B cell (primary cell): ENCODE measurements at regions of chr4 and their contacts with region 1.

Region 1: DNA sequence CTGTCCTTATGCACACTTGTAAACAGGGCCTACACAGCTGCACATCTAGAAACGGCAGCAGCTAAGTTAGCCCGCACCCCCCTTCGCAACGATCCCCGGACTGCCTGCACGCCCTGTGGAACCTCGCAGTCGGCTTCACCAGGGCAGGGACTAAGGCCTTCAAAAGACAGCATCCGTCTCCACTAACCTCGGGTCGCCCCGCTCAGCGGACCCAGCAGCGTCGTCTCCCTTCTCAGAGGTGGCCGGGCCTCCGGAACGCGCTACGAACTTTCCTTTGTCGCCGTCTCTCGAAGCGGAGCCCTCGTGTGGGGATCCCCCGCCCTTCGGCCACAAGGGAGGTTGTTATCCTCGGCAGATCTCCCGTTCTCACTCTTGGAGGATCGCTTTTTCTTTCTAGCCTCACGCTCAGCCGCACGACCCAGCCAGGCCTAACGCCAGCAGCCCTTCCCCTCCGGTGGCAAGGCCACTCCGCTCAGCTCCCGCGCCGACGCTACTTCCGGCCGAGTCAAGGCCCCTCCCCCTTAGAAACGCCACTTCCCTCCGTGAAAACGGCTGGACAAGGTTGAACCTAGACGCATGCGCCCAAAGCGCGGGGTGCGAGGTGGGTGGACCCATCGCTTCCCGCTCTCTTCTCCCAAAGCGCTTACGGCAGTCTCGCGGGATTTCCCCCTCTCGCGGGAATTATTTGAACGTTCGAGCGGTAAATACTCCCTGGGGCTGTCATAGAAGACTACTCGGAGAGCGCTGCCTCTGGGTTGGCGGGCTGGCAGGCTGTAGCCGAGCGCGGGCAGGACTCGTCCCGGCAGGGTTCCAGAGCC is at the starts of genes DCAF16 and NCAPG:
- DNase-seq: peak; percentile 100
- ATAC-seq: peak; percentile 94
- H3K4me3 ChIP-seq: peak within 1 kb of the TSS; percentile 81 to 91 (median 86)
- H3K4me3 Mint-ChIP-seq: peak within 1 kb of the TSS; percentile 97
- H3K27ac ChIP-seq: peak within 1 kb of the TSS; percentile 94 to 99
- H3K27ac Mint-ChIP-seq: peak within 1 kb of the TSS; percentile 100
- H3K4me1 ChIP-seq: peaks cover 32 to 37% of the 10 kb centered on the region in 2 donors
- H3K4me1 Mint-ChIP-seq: peaks cover 54% of the 10 kb centered on the region
- H3K27me3 ChIP-seq: no peaks in the 10 kb centered on the region
- H3K27me3 Mint-ChIP-seq: no peaks in the 10 kb centered on the region
- CTCF ChIP-seq: no peak
- total RNA-seq, gene DCAF16: 68.1 and 69.9 TPM in 2 replicates
- total RNA-seq, gene NCAPG: 0.44 and 0.84 TPM in 2 replicates

Region 2: DNA sequence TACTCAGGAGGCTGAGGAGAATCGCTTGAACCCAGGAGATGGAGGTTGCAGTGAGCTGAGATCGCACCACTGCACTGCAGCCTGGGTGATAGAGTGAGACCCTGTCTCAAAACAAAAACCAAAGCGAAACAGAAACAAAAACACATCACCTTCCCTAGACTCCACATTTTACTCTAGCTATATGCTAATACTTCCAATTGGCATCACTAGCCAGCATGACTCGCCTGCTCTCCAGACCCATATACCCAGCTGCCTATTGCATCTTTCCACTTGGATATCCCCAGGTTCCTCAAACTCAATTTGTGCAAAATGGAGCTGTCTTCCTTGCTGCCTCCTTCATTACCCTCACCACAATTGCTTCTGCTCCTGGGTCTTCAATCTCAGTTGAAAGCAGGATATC is 255.9 kb before region 1 on chr4:
- CTCF ChIA-PET with region 1: interaction called, 53 read pairs
- POLR2A ChIA-PET with region 1: no interaction called
- intact Hi-C with region 1: loop called (anchors 1 kb)
- DNase-seq: no peak
- ATAC-seq: no peak
- H3K4me3 ChIP-seq: no peak overlapping the region
- H3K4me3 Mint-ChIP-seq: no peak overlapping the region
- H3K27ac ChIP-seq: no peak overlapping the region
- H3K27ac Mint-ChIP-seq: no peak overlapping the region
- H3K4me1 ChIP-seq: no peaks in the 10 kb centered on the region
- H3K4me1 Mint-ChIP-seq: no peaks in the 10 kb centered on the region
- H3K27me3 ChIP-seq: peaks cover 0 to 3% (median 0%) of the 10 kb centered on the region in 4 experiments
- H3K27me3 Mint-ChIP-seq: peaks cover 32% of the 10 kb centered on the region
- CTCF ChIP-seq: no peak

Region 3: DNA sequence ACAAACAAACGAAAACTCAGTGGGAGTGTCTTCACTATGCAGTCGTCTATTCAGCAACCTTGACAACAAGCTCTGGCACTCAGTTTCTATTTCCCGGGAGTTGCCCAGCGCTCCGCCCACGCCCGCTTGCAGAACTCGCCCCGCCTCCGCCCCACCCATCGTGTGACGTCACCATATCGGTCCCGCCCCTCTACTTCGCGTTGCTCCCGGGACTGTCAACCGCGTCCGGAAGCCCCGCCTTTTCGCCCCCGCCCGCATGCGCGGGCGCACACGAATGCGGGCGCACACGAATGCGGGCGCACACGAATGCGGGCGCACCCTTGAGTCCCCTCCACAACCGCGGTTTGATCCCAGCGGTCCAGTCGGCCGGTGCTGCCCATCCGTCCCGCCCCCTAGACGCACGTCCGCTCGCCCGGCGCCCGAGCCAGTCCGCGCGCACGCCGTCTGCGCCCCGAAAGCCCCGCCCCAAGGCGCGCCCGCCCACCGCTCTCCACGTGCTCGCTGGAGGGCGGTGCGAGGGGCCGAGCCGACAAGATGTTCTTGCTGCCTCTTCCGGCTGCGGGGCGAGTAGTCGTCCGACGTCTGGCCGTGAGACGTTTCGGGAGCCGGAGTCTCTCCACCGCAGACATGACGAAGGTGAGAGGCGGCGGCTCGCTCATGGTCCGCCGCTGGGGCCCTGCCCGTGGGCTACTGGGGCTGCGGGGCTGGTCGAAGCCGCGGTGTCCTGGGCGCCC is 233.4 kb before region 1 on chr4 and contains the start of gene LAP3:
- CTCF ChIA-PET with region 1: interaction called, 3 read pairs
- POLR2A ChIA-PET with region 1: interaction called, 4 read pairs
- intact Hi-C with region 1: loop called (anchors 1 kb)
- DNase-seq: peak; percentile 99
- ATAC-seq: peak; percentile 89
- H3K4me3 ChIP-seq: peak within 1 kb of the TSS; percentile 71 to 95 (median 83)
- H3K4me3 Mint-ChIP-seq: peak within 1 kb of the TSS; percentile 92
- H3K27ac ChIP-seq: peak within 1 kb of the TSS; percentile 85 to 87
- H3K27ac Mint-ChIP-seq: peak within 1 kb of the TSS; percentile 96
- H3K4me1 ChIP-seq: peaks cover 13 to 25% of the 10 kb centered on the region in 2 donors
- H3K4me1 Mint-ChIP-seq: peaks cover 30% of the 10 kb centered on the region
- H3K27me3 ChIP-seq: no peaks in the 10 kb centered on the region
- H3K27me3 Mint-ChIP-seq: no peaks in the 10 kb centered on the region
- CTCF ChIP-seq: no peak
- total RNA-seq, gene LAP3: 30.1 and 33.5 TPM in 2 replicates

Region 4: DNA sequence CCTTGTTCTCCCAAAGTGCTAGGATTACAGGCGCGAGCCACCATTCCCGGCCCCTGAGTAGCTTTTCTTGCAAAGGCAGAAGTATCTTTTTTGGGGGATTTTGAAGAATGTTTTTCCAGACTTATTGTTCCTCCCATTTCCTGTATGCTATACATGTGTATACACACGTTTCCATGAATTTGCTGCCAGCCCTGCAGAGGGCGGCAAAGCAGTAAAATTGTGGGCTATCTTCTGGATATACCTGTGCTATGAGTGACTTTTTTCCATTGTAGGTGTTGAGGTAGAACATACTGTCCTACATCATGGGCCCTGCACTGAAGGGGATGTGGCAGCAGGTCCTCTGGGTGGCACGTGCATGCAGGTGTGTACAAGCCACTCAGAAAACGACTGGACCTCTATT is 213.0 kb before region 1 on chr4:
- CTCF ChIA-PET with region 1: no interaction called
- POLR2A ChIA-PET with region 1: no interaction called
- intact Hi-C with region 1: loop called (anchors 1 kb)
- DNase-seq: no peak
- ATAC-seq: no peak
- H3K4me3 ChIP-seq: no peak overlapping the region
- H3K4me3 Mint-ChIP-seq: no peak overlapping the region
- H3K27ac ChIP-seq: no peak overlapping the region
- H3K27ac Mint-ChIP-seq: no peak overlapping the region
- H3K4me1 ChIP-seq: peaks cover 16 to 28% of the 10 kb centered on the region in 2 donors
- H3K4me1 Mint-ChIP-seq: peaks cover 30% of the 10 kb centered on the region
- H3K27me3 ChIP-seq: no peaks in the 10 kb centered on the region
- H3K27me3 Mint-ChIP-seq: no peaks in the 10 kb centered on the region
- CTCF ChIP-seq: no peak

Region 5: DNA sequence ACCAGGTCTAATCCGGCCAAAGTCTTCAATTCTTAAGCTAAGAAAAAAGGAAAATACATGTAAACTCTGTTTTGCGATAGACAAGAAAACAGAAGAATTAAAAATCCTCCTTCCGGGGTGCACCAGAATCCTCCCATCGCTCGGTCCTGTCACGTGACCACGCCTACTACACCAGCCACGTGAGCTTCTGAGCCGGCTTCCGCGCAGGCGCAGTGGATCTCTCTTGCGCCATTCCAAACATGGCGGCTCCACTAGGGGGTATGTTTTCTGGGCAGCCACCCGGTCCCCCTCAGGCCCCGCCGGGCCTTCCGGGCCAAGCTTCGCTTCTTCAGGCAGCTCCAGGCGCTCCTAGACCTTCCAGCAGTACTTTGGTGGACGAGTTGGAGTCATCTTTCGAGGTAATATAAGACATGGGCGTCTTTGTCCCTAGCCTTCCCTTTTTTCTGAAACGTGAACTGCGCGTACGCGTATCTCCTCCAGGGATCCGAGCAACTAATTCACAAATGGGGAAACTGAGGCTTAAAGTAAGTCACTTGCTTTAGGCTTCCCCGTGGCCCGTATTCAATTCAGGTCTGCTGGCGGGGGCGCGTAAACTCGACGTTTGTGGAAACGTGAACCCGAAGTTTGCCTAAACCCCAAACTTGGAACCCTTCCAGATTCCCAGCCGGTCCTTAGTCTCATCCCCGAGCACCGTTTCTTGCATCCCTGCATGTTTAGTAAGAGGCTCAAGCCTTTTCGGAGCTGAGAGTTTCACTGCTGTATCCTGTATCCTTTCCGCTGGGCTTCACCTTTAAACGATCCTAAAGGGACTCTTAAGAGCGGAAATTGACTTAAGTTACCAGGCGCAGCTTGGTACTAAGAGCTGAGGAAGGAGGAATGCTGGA is 195.8 kb before region 1 on chr4 and contains the start of gene MED28:
- CTCF ChIA-PET with region 1: interaction called, 5 read pairs
- POLR2A ChIA-PET with region 1: interaction called, 3 read pairs
- intact Hi-C with region 1: loop called (anchors 1 kb)
- DNase-seq: peak; percentile 96
- ATAC-seq: peak; percentile 91
- H3K4me3 ChIP-seq: peak within 1 kb of the TSS; percentile 73 to 100 (median 97)
- H3K4me3 Mint-ChIP-seq: peak within 1 kb of the TSS; percentile 100
- H3K27ac ChIP-seq: peak within 1 kb of the TSS; percentile 79 to 94
- H3K27ac Mint-ChIP-seq: peak within 1 kb of the TSS; percentile 91
- H3K4me1 ChIP-seq: peaks cover 16 to 35% of the 10 kb centered on the region in 2 donors
- H3K4me1 Mint-ChIP-seq: peaks cover 44% of the 10 kb centered on the region
- H3K27me3 ChIP-seq: no peaks in the 10 kb centered on the region
- H3K27me3 Mint-ChIP-seq: no peaks in the 10 kb centered on the region
- CTCF ChIP-seq: no peak
- total RNA-seq, gene MED28: 81.5 and 83.8 TPM in 2 replicates

Region 6: DNA sequence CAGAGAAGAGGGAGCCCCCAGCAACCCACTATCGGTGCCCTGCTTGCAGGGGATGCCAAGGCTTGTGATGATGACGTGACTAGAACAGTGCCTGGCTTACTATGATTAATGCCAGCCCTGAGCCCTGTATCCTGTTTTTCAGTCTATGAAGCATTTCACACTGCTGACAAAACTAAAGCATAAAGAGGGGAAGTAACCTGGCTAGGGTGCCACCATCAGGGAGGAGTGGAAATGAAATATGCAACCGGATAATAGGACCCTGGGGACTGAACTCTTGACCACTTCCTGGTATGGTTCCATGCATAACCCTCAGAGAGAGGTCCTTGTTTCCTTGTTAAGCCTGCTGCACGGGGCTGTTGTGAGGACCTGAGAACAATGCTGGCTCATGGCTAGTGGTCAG is 145.7 kb before region 1 on chr4:
- CTCF ChIA-PET with region 1: no interaction called
- POLR2A ChIA-PET with region 1: no interaction called
- intact Hi-C with region 1: no loop called
- DNase-seq: peak; percentile 56
- ATAC-seq: peak; percentile 80
- H3K4me3 ChIP-seq: no peak overlapping the region
- H3K4me3 Mint-ChIP-seq: peak overlapping the region; percentile 49
- H3K27ac ChIP-seq: no peak overlapping the region
- H3K27ac Mint-ChIP-seq: peak overlapping the region; percentile 42
- H3K4me1 ChIP-seq: peaks cover 26 to 32% of the 10 kb centered on the region in 2 donors
- H3K4me1 Mint-ChIP-seq: peaks cover 43% of the 10 kb centered on the region
- H3K27me3 ChIP-seq: no peaks in the 10 kb centered on the region
- H3K27me3 Mint-ChIP-seq: peaks cover 10% of the 10 kb centered on the region
- CTCF ChIP-seq: no peak

Region 7: DNA sequence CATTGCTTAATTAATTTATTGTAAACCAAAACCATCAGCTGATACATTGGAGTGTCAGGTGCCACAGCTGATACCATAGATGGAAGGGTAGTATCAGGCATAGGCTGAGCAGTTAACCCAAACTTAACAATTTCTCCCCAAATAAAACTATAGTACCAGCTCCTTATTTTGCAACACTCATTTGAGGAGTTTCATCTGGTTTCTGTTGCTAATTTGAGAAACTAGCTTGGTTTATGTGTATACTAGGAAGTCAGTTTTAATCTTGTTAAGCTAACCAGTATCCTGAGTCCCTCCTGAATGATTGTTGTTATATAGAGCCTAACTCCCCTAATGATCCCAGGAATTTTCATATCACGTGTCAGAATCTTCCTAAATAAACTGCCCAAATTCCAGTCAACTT is 12.7 kb before region 1 on chr4:
- CTCF ChIA-PET with region 1: interaction called, 11 read pairs
- POLR2A ChIA-PET with region 1: no interaction called
- intact Hi-C with region 1: no loop called
- DNase-seq: no peak
- ATAC-seq: no peak
- H3K4me3 ChIP-seq: no peak overlapping the region
- H3K4me3 Mint-ChIP-seq: no peak overlapping the region
- H3K27ac ChIP-seq: no peak overlapping the region
- H3K27ac Mint-ChIP-seq: no peak overlapping the region
- H3K4me1 ChIP-seq: no peaks in the 10 kb centered on the region
- H3K4me1 Mint-ChIP-seq: peaks cover 2% of the 10 kb centered on the region
- H3K27me3 ChIP-seq: no peaks in the 10 kb centered on the region
- H3K27me3 Mint-ChIP-seq: no peaks in the 10 kb centered on the region
- CTCF ChIP-seq: no peak

Region 8: GRCh38 chr4:17915439-17915838 is 105.0 kb after region 1 on chr4:
- CTCF ChIA-PET with region 1: no interaction called
- POLR2A ChIA-PET with region 1: no interaction called
- intact Hi-C with region 1: no loop called
- DNase-seq: no peak
- ATAC-seq: no peak
- H3K4me3 ChIP-seq: no peak overlapping the region
- H3K4me3 Mint-ChIP-seq: no peak overlapping the region
- H3K27ac ChIP-seq: no peak overlapping the region
- H3K27ac Mint-ChIP-seq: no peak overlapping the region
- H3K4me1 ChIP-seq: no peaks in the 10 kb centered on the region
- H3K4me1 Mint-ChIP-seq: no peaks in the 10 kb centered on the region
- H3K27me3 ChIP-seq: no peaks in the 10 kb centered on the region
- H3K27me3 Mint-ChIP-seq: no peaks in the 10 kb centered on the region
- CTCF ChIP-seq: no peak

Region 9: DNA sequence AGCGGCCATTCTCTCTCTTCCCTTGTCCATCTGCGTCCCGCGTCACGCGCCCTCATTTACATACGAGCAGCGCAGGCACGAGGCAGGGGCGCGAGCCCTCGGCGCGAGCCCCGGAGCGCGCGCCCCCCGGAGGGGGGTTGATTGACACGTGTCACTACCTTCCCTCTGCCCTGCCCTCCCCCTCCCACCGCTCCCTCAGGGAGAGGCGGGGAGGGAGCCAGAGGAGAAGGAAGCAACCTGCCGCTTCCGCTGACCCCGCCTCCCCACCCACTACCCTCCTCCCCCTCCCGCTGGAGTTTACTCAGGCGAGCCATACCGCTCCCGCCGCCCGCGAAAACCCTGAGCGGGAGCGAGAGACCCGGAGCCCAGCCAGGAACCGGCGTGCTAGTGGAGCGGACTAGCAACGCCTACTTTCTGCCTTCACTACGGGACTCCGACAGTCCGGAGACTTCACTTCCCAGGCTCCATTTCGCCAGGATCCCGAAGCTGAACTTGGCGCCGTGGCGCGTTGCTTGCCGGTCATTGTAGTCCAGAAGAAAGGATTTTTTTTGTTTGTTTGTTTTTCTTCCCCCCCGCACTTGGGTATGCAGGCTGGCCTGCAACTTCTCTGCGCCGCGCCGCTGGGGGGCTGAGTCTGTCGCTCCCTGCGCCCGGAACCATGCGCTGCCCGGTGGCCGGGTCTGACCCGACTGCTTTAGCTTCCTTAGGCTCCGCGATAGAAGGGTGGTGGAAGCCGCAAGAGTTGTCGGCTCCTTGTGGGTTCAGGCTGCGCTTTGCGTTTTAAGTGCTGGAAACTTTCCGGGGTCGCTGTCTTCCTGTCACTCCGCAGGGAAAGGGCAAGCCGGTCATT is 211.5 kb after region 1 on chr4 and contains the start of gene LCORL:
- CTCF ChIA-PET with region 1: interaction called, 4 read pairs
- POLR2A ChIA-PET with region 1: interaction called, 3 read pairs
- intact Hi-C with region 1: loop called (anchors 1 kb)
- DNase-seq: peak; percentile 95
- ATAC-seq: peak; percentile 77
- H3K4me3 ChIP-seq: peak within 1 kb of the TSS; percentile 71 to 98 (median 85)
- H3K4me3 Mint-ChIP-seq: peak within 1 kb of the TSS; percentile 96
- H3K27ac ChIP-seq: peak within 1 kb of the TSS; percentile 86 to 88
- H3K27ac Mint-ChIP-seq: peak within 1 kb of the TSS; percentile 98
- H3K4me1 ChIP-seq: peaks cover 14 to 18% of the 10 kb centered on the region in 2 donors
- H3K4me1 Mint-ChIP-seq: peaks cover 22% of the 10 kb centered on the region
- H3K27me3 ChIP-seq: peaks cover 0 to 5% (median 0%) of the 10 kb centered on the region in 4 experiments
- H3K27me3 Mint-ChIP-seq: peaks cover 3% of the 10 kb centered on the region
- CTCF ChIP-seq: peak; percentile 15
- total RNA-seq, gene LCORL: 30.4 and 31.3 TPM in 2 replicates

Region 10: GRCh38 chr4:18390655-18391353 is 580.3 kb after region 1 on chr4:
- CTCF ChIA-PET with region 1: no interaction called
- POLR2A ChIA-PET with region 1: no interaction called
- intact Hi-C with region 1: no loop called
- DNase-seq: no peak
- ATAC-seq: no peak
- H3K4me3 ChIP-seq: no peak overlapping the region
- H3K4me3 Mint-ChIP-seq: no peak overlapping the region
- H3K27ac ChIP-seq: no peak overlapping the region
- H3K27ac Mint-ChIP-seq: no peak overlapping the region
- H3K4me1 ChIP-seq: no peaks in the 10 kb centered on the region
- H3K4me1 Mint-ChIP-seq: no peaks in the 10 kb centered on the region
- H3K27me3 ChIP-seq: no peaks in the 10 kb centered on the region
- H3K27me3 Mint-ChIP-seq: peaks cover 3% of the 10 kb centered on the region
- CTCF ChIP-seq: no peak